ENCODE measurements at regions of chr6 and their contacts with region 1.

Region 1: DNA sequence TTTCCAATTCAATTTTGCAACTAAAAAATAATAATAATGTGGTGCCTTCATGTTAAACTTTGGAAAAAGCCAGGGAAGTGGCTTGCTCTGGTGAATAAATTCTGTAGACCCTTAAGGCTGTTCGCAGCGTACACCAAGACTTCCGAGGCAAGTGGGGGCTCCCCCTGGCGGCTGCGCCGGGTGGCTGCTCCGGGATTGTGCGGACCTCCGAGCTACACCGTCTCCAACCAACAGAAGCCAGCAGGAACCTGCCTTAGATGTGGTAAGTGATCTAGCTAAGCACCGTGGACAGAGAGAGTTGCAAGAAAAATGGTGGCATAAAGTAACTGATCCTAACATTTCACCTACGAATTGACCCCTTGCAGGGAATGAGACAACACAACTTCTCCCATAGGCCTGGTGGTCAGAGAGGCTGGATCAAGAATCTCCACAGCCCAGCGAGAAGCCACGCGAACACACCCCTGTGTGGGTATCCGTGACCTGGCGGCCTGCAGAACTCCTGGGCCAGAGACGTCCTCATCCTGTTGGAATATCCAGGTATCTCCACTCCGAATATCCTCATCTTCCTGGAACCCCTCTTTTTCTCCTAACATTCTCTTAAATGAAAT is 69.6 kb downstream of the TBXT start:
- DNase-seq: peak; percentile 74 to 81
- H3K4me3 ChIP-seq: peak overlapping the region; percentile 25 to 36
- H3K27ac ChIP-seq: no peak overlapping the region
- H3K4me1 ChIP-seq: no peaks in the 10 kb centered on the region
- H3K27me3 ChIP-seq: no peaks in the 10 kb centered on the region
- CTCF ChIP-seq: peak; percentile 75 to 94 (median 81)
- POLR2A ChIP-seq: no peak

Region 2: GRCh38 chr6:165519316-165519715 is 578.7 kb before region 1 on chr6:
- intact Hi-C with region 1: no loop called
- DNase-seq: no peak
- H3K4me3 ChIP-seq: no peak overlapping the region
- H3K27ac ChIP-seq: no peak overlapping the region
- H3K4me1 ChIP-seq: no peaks in the 10 kb centered on the region
- H3K27me3 ChIP-seq: no peaks in the 10 kb centered on the region
- CTCF ChIP-seq: no peak
- POLR2A ChIP-seq: no peak

Region 3: GRCh38 chr6:165884813-165885765 is 212.9 kb before region 1 on chr6:
- intact Hi-C with region 1: loop called (anchors 5 kb)
- DNase-seq: peak; percentile 81 to 85
- H3K4me3 ChIP-seq: no peak overlapping the region
- H3K27ac ChIP-seq: no peak overlapping the region
- H3K4me1 ChIP-seq: no peaks in the 10 kb centered on the region
- H3K27me3 ChIP-seq: no peaks in the 10 kb centered on the region
- CTCF ChIP-seq: peak; percentile 82 to 95 (median 94)
- POLR2A ChIP-seq: no peak

Measured in uterus (tissue), 4 donors.